BJ (cell line): ENCODE measurements at regions of chr3 and their contacts with region 1.

Region 1: GRCh38 chr3:196073188-196073838 is 8.6 kb downstream of the TFRC start:
- DNase-seq: no peak
- H3K4me3 ChIP-seq: no peak overlapping the region
- H3K27me3 ChIP-seq: no peaks in the 10 kb centered on the region
- CTCF ChIP-seq: peak; percentile 82

Region 2: DNA sequence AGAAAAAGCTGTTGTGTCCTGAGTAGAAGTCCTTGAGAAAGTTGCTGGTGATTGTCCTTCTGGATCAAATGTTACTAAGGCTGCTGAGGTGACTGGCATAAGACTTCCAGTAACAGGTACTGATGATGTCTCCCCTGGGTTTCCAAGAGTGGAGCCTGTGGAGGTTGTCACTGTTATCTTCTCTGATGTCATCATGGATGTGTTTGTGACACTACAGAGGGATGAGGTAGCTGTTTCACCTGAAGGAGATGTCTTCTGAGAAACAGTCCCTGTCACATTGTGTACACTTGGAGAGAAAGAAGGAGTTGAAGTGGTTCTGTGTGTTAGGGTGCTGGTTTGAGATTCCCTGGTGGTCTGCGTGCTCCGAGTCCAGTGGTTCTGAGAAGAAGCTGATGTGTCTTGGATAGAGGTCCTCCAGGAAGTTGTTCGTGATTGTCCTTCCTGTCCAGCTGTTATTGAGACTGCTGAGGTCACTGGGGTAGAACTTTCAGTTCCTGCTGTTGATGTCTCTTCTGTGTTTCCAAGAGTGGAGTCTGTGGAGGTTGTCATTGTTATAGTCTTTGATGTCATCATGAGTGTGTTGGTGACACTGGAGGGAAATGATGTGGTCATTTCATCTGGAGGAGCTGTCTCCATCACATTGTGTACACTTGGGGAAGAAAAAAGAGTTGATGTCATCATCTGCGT is 282.6 kb before region 1 on chr3:
- CTCF ChIA-PET with region 1: no interaction called
- POLR2A ChIA-PET with region 1: no interaction called
- DNase-seq: no peak
- H3K4me3 ChIP-seq: no peak overlapping the region
- H3K27me3 ChIP-seq: no peaks in the 10 kb centered on the region
- CTCF ChIP-seq: no peak

Region 3: GRCh38 chr3:196179380-196180308 is 106.3 kb after region 1 on chr3:
- CTCF ChIA-PET with region 1: interaction called, 11 read pairs
- POLR2A ChIA-PET with region 1: no interaction called
- DNase-seq: no peak
- H3K4me3 ChIP-seq: no peak overlapping the region
- H3K27me3 ChIP-seq: 0 out of 2 replicates have a peak, but pooled peaks cover 1% of the 10 kb centered on the region
- CTCF ChIP-seq: no peak

Region 4: GRCh38 chr3:196192524-196193051 is 119.3 kb after region 1 on chr3:
- CTCF ChIA-PET with region 1: interaction called, 56 read pairs
- POLR2A ChIA-PET with region 1: no interaction called
- DNase-seq: no peak
- H3K4me3 ChIP-seq: no peak overlapping the region
- H3K27me3 ChIP-seq: no peaks in the 10 kb centered on the region
- CTCF ChIP-seq: no peak